GM10248 (cell line): ENCODE measurements at regions of chr2 and their contacts with region 1.

Region 1: GRCh38 chr2:102449370-102449974 is 23.6 kb upstream of the SLC9A4 start:
- DNase-seq: peak; percentile 46
- CTCF ChIP-seq: peak; percentile 79

Region 2: GRCh38 chr2:102094917-102095316 is 354.6 kb before region 1 on chr2:
- CTCF ChIA-PET with region 1: no interaction called
- POLR2A ChIA-PET with region 1: no interaction called
- DNase-seq: no peak
- CTCF ChIP-seq: no peak

Region 3: DNA sequence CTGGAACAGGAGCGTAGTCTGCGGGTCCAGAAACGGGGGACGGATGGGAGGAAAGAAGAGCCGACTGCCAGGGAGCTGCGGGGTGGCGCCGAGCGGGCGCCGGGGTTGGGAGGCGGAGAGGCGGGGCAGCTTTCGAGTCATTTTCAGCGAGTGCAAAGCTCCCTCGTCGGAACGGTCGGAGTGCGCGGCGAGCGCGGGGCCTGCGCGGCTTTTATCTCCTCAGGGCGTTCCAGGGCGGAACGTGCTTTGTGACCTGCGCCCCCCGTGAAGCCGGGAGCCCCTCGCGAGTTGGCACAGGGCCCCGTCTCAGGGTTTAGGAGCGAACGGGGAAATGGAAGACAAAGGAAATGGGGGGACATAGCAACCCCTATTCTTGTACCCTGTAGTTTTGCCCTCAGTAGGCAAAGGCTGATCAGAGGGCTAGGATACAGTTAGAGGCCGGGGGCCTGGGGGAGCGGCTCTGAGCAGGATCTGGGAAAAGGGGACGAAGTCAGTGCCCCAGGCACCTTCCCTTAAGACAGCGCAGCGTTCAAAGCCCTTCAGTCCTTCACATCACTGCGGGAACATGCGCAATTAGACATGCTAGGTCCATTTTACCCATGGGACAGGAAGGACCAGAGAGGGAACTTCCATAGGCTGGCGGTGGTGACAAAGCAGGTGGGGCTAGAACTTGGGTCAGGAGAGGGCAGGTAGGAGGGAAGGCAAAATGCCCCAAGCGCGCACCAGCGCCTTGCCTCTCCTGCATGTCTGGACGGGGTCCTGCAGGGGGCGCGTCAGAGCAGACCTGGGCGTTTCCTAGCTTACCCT is 198.2 kb before region 1 on chr2:
- CTCF ChIA-PET with region 1: interaction called, 49 read pairs
- POLR2A ChIA-PET with region 1: no interaction called
- DNase-seq: peak; percentile 72
- CTCF ChIP-seq: peak; percentile 75

Region 4: GRCh38 chr2:102301867-102302362 is 147.6 kb before region 1 on chr2:
- CTCF ChIA-PET with region 1: interaction called, 11 read pairs
- POLR2A ChIA-PET with region 1: no interaction called
- DNase-seq: peak; percentile 36
- CTCF ChIP-seq: peak; percentile 52

Region 5: DNA sequence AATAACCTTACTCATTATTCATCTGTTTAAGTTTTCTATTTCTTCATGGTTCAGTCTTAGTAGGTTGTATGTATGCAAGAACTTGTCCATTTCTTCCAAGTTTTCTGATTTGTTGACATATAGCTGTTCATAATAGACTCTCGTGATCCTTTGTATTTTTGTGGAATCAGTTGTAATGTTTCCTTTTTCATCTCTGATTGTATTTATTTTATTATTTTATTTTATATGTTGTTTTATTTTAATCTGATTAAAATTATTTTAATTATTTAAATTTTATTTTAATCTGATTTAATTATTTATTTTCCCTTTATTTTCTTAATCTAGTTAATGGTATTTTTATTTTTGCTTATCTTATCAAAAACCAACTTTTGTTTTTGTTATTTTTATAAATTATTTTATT is 126.4 kb after region 1 on chr2:
- CTCF ChIA-PET with region 1: no interaction called
- POLR2A ChIA-PET with region 1: no interaction called
- DNase-seq: no peak
- CTCF ChIP-seq: no peak